Sigmoid colon (tissue), 7 donors: ENCODE measurements at regions of chr7 and their contacts with region 1.

Region 1: GRCh38 chr7:20598459-20599309 is 16.8 kb upstream of the ABCB5 start:
- DNase-seq: no peak
- H3K4me3 ChIP-seq: no peak overlapping the region
- H3K27ac ChIP-seq: no peak overlapping the region
- H3K4me1 ChIP-seq: peaks cover 0 to 5% (median 0%) of the 10 kb centered on the region in 4 donors
- H3K27me3 ChIP-seq: no peaks in the 10 kb centered on the region
- CTCF ChIP-seq: peak; percentile 57 to 80 (median 65)
- EP300 ChIP-seq: no peak
- POLR2A ChIP-seq: no peak

Region 2: GRCh38 chr7:19708397-19709248 is 890.1 kb before region 1 on chr7 and contains the start of gene POLR1F:
- intact Hi-C with region 1: loop called (anchors 2 kb)
- DNase-seq: peak; percentile 96
- H3K4me3 ChIP-seq: peak within 1 kb of the TSS; percentile 63 to 90 (median 85)
- H3K27ac ChIP-seq: peak within 1 kb of the TSS; percentile 70 to 81 (median 76)
- H3K4me1 ChIP-seq: peaks cover 0 to 31% (median 20%) of the 10 kb centered on the region in 4 donors
- H3K27me3 ChIP-seq: no peaks in the 10 kb centered on the region
- CTCF ChIP-seq: peak; percentile 83 to 85 (median 84)
- EP300 ChIP-seq: peak in 2 of 4 donors; percentile 43 to 76
- POLR2A ChIP-seq: peak; percentile 59 to 86
- total RNA-seq, gene POLR1F: 9.7 to 15.6 (median 14.2) TPM

Region 3: GRCh38 chr7:19754521-19755116 is 844.1 kb before region 1 on chr7:
- intact Hi-C with region 1: loop called (anchors 2 kb)
- DNase-seq: no peak
- H3K4me3 ChIP-seq: no peak overlapping the region
- H3K27ac ChIP-seq: no peak overlapping the region
- H3K4me1 ChIP-seq: no peaks in the 10 kb centered on the region
- H3K27me3 ChIP-seq: no peaks in the 10 kb centered on the region
- CTCF ChIP-seq: peak in 3 of 4 experiments; percentile 23 to 62 (median 30)
- EP300 ChIP-seq: no peak
- POLR2A ChIP-seq: no peak

Region 4: DNA sequence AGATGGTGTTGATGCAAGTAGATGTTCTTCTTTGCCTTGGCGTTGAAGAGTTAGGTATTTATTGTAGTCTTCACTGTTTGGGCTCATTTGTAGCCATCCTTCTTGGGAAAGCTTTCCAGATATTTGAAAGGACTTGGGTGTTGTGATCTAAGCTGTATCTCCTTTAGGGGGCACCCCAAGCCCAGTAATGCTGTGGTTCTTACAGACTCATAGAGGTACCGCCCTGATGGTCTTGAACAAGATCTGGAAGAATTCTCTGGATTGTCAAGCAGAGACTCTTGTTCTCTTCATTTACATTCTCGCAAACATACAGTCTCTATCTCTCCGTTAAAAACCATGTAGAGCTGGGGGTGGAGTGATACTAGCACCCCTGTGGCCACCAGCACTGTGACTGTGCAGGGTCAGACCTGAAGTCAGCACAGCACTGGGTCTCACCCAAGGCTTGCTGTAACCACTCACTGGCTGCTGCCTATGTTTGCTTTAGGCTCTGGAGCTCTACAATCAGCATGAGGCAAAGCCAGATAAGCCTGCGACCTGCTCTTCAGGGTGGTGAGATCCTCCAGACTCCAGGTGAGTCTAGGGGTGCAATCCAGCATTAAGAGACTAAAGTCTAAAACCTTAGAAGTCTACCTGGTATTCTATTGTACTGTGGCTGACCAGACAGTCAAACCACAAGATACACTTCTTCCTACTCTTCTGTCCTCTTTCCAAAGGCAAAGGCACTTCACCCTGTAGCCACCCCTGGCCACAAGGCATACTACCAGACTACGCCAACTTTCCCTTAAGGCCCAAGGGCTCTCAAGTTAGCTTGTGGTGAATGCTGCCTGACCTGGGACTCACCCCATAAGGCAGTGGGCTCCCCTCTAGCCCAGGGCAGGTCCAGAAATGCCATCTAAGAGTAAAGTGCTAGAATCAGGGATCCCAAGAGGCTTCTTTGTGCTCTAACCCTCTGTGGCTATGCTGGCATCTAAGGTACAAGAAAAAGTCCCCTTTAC is 615.5 kb before region 1 on chr7:
- intact Hi-C with region 1: loop called (anchors 5 kb)
- DNase-seq: peak; percentile 82
- H3K4me3 ChIP-seq: no peak overlapping the region
- H3K27ac ChIP-seq: no peak overlapping the region
- H3K4me1 ChIP-seq: peaks cover 0 to 5% (median 0%) of the 10 kb centered on the region in 4 donors
- H3K27me3 ChIP-seq: no peaks in the 10 kb centered on the region
- CTCF ChIP-seq: peak in 3 of 4 experiments; percentile 34 to 48 (median 43)
- EP300 ChIP-seq: no peak
- POLR2A ChIP-seq: no peak

Region 5: GRCh38 chr7:20172736-20173334 is 425.8 kb before region 1 on chr7:
- intact Hi-C with region 1: loop called (anchors 10 kb)
- DNase-seq: peak; percentile 88
- H3K4me3 ChIP-seq: no peak overlapping the region
- H3K27ac ChIP-seq: no peak overlapping the region
- H3K4me1 ChIP-seq: peaks cover 0 to 5% (median 0%) of the 10 kb centered on the region in 4 donors
- H3K27me3 ChIP-seq: no peaks in the 10 kb centered on the region
- CTCF ChIP-seq: peak; percentile 40 to 72 (median 62)
- EP300 ChIP-seq: no peak
- POLR2A ChIP-seq: no peak

Region 6: DNA sequence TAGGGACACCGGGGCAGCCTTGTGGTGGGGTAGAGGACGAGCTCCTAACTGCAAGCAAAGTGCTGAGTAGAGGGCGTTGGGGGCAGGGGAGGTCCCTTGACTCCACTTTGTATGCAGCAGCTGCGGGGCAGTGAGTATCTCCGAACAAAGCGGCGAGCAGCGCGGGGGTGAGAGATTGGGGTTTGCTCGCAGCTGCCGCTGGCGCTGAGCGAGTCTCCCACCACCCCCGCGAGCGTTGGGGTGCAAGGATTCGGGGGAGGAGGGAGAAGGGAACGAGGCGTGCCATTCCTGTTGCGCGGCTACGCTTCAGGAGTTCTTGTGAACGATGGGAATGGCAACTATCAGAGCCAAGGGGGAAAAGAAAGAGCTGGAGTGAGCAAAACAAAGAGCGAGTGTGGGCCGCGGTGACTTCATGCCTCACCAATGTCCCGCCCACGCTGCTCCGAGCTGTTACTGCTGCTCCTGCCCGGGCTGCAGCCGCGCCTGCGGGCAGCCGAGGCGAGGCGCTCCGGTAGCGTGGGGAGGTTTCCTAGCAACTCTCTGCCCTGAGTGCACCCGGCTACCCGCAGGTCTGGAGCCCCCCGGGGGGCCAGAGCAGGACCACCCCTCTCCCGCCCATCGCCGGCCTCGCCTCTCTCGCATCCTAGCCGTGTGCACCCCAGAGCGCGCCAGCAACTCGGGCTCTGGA is 268.3 kb before region 1 on chr7 and contains the start of gene ITGB8:
- intact Hi-C with region 1: loop called (anchors 10 kb)
- DNase-seq: peak; percentile 93
- H3K4me3 ChIP-seq: peak within 1 kb of the TSS; percentile 56 to 81 (median 77)
- H3K27ac ChIP-seq: peak within 1 kb of the TSS; percentile 86 to 95 (median 90)
- H3K4me1 ChIP-seq: peaks cover 0 to 19% (median 12%) of the 10 kb centered on the region in 4 donors
- H3K27me3 ChIP-seq: no peaks in the 10 kb centered on the region
- CTCF ChIP-seq: no peak
- EP300 ChIP-seq: peak in 1 of 4 donors; percentile 19
- POLR2A ChIP-seq: peak; percentile 14 to 35
- total RNA-seq, gene ITGB8: 9.0 to 22.4 (median 20.2) TPM